HEK293T (cell line): ENCODE measurements at regions of chr14 and their contacts with region 1.

Region 1: GRCh38 chr14:67704484-67705089 is 2.9 kb downstream of the RDH12 start:
- DNase-seq: peak; percentile 62

Region 2: DNA sequence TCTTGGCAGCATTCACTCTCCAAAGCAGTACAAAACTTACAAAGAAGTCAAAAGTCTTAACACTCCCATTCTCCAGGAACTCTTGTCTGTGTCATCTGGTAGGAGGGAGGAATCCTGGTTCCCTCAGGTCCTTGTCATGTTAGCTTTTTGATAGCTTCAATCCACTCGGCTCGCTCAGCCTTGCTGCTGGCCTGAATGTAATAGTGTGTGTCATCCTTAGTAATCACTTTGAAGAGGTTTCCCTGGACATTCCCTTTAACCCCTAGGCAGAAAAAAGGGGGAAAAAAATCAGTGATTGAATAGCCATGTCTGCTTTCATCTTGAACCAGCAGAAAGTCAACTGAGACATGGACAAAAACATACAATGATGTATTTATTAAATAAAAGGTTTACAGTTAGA is 317.4 kb before region 1 on chr14:
- CTCF ChIA-PET with region 1: no interaction called
- POLR2A ChIA-PET with region 1: no interaction called
- DNase-seq: no peak

Region 3: DNA sequence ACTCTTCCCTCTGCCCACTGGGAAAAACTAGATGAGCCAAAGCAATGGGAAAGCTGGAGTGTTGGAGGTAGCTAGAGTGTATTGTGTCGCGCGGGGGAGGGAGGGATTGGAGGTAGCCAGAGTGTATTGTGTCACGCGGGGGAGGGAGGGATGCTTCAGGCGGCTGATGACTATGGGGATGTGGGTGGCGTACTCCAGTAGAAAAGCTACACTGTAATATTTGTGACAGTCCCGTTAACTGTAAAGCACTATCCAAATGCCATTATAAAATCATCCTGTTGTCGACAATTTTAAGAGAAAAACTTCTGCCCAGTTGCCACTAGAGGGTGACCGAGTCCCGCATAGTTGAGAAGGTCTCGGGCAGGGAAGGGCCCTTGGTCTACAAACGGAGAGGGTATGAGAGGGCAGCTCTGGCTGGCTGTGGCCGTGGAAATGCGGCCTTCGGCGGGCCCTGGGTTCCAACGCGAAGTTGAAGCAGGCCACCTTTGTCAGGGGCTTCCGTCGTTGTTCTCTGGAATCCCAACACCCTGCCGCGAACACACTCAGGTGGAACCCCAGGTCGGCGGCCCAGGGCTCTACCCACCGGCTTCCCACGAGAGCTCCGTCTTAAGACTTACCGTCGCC is 277.5 kb before region 1 on chr14:
- CTCF ChIA-PET with region 1: interaction called, 26 read pairs
- POLR2A ChIA-PET with region 1: no interaction called
- DNase-seq: peak; percentile 83

Region 4: DNA sequence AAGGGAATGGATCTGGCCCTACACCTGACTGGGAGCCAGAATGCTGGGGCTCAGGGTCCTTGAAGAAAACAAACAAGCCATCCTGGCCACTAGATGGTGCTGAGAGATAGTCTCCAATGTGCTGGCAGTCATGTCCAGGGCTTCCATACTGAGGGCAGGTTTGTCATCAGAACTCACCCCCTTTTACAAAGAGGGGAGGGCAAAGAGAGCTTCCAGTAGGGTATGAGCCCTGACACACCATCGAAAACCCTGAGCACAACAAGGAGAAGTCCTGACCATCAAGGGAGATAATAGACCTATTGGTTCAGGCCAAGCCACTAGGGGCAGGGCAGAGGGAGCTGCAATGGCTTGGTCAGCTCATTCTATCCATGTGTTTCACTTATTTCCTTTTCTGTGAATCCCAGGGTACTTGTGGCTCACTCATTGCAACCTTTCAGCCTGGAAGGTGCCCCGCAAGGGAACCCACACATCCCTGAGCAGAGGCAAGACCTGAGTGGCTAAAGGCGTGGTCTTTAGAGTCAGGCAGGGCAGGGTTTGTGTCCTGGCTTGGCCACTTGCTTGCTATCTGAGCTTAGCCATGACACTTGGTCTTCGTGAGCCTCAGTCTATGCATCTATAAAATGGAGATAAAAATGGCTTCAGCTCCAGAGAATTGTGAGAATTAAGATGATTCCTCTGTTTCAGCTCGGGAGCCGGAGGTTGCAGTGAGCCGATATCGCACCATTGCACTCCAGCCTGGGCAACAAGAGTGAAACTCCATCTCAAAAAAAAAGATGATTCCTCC is 177.7 kb before region 1 on chr14:
- CTCF ChIA-PET with region 1: interaction called, 20 read pairs
- POLR2A ChIA-PET with region 1: interaction called, 3 read pairs
- DNase-seq: peak; percentile 63

Region 5: DNA sequence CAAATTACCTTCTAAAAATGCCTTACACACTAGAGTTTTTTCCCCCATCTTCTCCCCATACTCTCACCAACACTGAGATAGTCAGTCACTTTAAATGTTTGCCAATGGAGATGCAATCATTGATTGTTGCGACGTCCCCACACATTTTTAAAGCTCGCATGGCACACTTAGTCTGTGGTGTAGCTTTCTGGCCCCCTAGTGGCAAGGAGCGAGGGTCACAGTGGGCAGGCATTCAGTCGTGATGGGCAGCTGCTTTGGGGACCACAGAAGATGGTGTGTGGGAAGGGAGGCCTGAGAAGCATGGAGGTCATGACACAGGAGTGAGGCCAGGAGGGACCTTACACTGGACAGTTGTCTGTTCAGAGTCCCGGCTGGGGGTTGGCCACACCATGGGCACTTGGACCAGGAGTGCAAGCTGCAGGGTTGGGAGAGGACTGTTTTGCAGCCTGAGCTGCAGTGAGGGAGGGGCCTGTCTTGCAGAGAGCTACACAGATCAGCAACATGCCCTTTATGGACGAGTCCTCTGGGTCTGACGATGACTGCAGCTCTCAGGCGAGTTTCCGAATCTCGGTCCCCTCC is 133.2 kb before region 1 on chr14:
- CTCF ChIA-PET with region 1: interaction called, 10 read pairs
- POLR2A ChIA-PET with region 1: no interaction called
- DNase-seq: peak; percentile 72

Region 6: DNA sequence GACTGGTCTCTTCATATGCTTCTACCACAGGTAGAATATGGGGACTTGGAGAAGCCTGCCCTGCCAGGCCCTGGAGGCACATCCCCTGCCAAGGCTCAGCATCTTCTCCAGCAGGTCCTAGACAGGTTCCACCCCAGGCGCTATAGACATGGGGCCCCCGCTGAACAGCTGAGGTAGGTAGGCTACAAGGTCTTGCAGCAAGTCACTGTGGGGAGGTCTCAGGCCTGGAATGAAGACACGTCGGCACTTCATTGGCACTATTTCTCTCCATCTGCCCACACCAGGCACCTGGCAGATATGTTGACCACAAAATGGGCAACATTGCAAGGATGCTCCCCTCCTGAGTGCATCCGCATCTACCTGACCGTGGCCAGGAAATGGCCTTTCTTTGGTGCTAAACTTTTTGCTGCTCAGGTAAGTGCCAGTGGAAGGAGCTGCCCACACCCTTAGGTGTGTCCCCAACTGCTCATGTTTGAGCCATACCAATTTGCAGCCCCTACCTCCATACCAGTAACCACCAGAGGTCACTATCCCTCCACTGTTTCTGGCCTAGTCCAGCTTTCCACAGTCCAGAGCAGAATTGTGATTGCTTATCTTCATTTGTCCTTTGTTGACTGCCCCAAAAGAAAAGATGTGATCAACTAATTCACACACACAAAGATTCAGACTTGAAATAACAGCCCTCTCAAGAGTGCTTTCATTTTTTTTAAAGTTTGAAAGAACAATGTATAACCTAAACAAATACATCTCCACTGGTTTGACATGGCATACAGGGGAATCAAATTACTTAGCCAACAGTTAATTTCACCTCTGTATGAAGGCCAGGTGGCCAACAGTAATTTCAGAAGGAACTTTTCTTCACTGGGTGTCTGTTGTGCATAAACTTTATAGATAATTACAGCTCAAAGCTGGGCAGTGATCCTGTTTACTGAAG is 120.6 kb before region 1 on chr14:
- CTCF ChIA-PET with region 1: interaction called, 57 read pairs
- POLR2A ChIA-PET with region 1: interaction called, 3 read pairs
- DNase-seq: peak; percentile 74

Region 7: GRCh38 chr14:67619446-67620216 is 85.0 kb before region 1 on chr14 and contains the start of gene ARG2:
- CTCF ChIA-PET with region 1: interaction called, 27 read pairs
- POLR2A ChIA-PET with region 1: interaction called, 3 read pairs
- DNase-seq: peak; percentile 96